ENCODE measurements at regions of chr10 and their contacts with region 1.

Region 1: GRCh38 chr10:4656576-4657182 is 169.3 kb upstream of the AKR1E2 start:
- DNase-seq: peak; percentile 47 to 66 (median 59)
- ATAC-seq: peak in 3 of 4 donors; percentile 70 to 76 (median 72)
- H3K4me3 ChIP-seq: no peak overlapping the region
- H3K27ac ChIP-seq: peak overlapping the region in 1 of 12 donors; percentile 12
- H3K4me1 ChIP-seq: peaks cover 0 to 22% (median 8%) of the 10 kb centered on the region in 12 donors
- H3K27me3 ChIP-seq: no peaks in the 10 kb centered on the region
- CTCF ChIP-seq: peak; percentile 85 to 97 (median 91)
- POLR2A ChIP-seq: no peak

Region 2: GRCh38 chr10:3197348-3198003 is 1459.2 kb before region 1 on chr10:
- intact Hi-C with region 1: loop called in 5 of 10 experiments (anchors 5 to 10 kb)
- DNase-seq: peak; percentile 78 to 90 (median 83)
- ATAC-seq: peak; percentile 76 to 96 (median 92)
- H3K4me3 ChIP-seq: peak overlapping the region in 9 of 12 donors; percentile 18 to 43 (median 32)
- H3K27ac ChIP-seq: peak overlapping the region in 4 of 12 donors; percentile 26 to 61 (median 28)
- H3K4me1 ChIP-seq: peaks cover 0 to 23% (median 11%) of the 10 kb centered on the region in 12 donors
- H3K27me3 ChIP-seq: no peaks in the 10 kb centered on the region
- CTCF ChIP-seq: peak; percentile 81 to 96 (median 93)
- POLR2A ChIP-seq: no peak

Region 3: GRCh38 chr10:3791974-3792633 is 864.6 kb before region 1 on chr10:
- intact Hi-C with region 1: loop called in 5 of 10 experiments (anchors 5 to 10 kb)
- DNase-seq: no peak
- ATAC-seq: no peak
- H3K4me3 ChIP-seq: no peak overlapping the region
- H3K27ac ChIP-seq: no peak overlapping the region
- H3K4me1 ChIP-seq: peaks cover 0 to 5% (median 0%) of the 10 kb centered on the region in 12 donors
- H3K27me3 ChIP-seq: no peaks in the 10 kb centered on the region
- CTCF ChIP-seq: no peak
- POLR2A ChIP-seq: no peak

Region 4: GRCh38 chr10:4081685-4082111 is 575.0 kb before region 1 on chr10:
- intact Hi-C with region 1: loop called in 4 of 10 experiments (anchors 5 to 10 kb)
- DNase-seq: peak in 3 of 5 donors; percentile 43 to 55 (median 47)
- ATAC-seq: peak in 3 of 4 donors; percentile 28 to 57 (median 57)
- H3K4me3 ChIP-seq: no peak overlapping the region
- H3K27ac ChIP-seq: peak overlapping the region in 10 of 12 donors; percentile 40 to 59 (median 52)
- H3K4me1 ChIP-seq: peaks cover 0 to 55% (median 32%) of the 10 kb centered on the region in 12 donors
- H3K27me3 ChIP-seq: no peaks in the 10 kb centered on the region
- CTCF ChIP-seq: no peak
- POLR2A ChIP-seq: no peak

Region 5: DNA sequence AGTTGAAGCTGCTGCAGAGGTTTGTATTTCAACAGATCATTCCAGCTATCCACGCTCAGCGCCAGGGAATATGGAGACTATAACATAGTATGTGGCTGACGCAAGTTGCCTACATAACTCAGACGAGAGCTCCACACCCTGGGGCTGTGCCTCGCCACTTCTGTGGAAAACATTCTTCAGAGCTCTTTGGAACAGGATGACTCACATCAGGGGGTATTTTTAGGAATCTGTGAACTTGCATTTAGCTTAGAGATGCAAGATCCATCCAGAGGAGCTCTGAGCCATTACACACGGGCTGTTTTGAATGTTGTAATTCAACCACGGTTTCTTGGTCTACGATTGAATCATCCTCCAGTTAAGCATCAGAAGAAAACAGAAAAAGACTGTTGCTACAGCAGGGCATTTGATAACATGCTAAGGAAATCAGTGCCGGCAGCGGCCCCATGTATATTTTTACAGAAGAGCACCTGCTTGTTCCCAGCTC is 312.1 kb before region 1 on chr10:
- intact Hi-C with region 1: loop called in 2 of 10 experiments (anchors 10 kb)
- DNase-seq: peak; percentile 65 to 80 (median 65)
- ATAC-seq: peak; percentile 94 to 97 (median 95)
- H3K4me3 ChIP-seq: peak overlapping the region in 3 of 12 donors; percentile 2 to 25 (median 22)
- H3K27ac ChIP-seq: peak overlapping the region; percentile 56 to 84 (median 69)
- H3K4me1 ChIP-seq: peaks cover 0 to 33% (median 18%) of the 10 kb centered on the region in 12 donors
- H3K27me3 ChIP-seq: no peaks in the 10 kb centered on the region
- CTCF ChIP-seq: peak in 5 of 12 donors; percentile 3 to 28 (median 18)
- POLR2A ChIP-seq: no peak

Region 6: GRCh38 chr10:4372601-4373000 is 284.1 kb before region 1 on chr10:
- intact Hi-C with region 1: loop called in 2 of 10 experiments (anchors 10 kb)
- DNase-seq: peak in 2 of 5 donors; percentile 19 to 35
- ATAC-seq: peak; percentile 84 to 98 (median 91)
- H3K4me3 ChIP-seq: no peak overlapping the region
- H3K27ac ChIP-seq: peak overlapping the region in 10 of 12 donors; percentile 32 to 71 (median 59)
- H3K4me1 ChIP-seq: peaks cover 0 to 20% (median 7%) of the 10 kb centered on the region in 12 donors
- H3K27me3 ChIP-seq: no peaks in the 10 kb centered on the region
- CTCF ChIP-seq: no peak
- POLR2A ChIP-seq: no peak

Region 7: DNA sequence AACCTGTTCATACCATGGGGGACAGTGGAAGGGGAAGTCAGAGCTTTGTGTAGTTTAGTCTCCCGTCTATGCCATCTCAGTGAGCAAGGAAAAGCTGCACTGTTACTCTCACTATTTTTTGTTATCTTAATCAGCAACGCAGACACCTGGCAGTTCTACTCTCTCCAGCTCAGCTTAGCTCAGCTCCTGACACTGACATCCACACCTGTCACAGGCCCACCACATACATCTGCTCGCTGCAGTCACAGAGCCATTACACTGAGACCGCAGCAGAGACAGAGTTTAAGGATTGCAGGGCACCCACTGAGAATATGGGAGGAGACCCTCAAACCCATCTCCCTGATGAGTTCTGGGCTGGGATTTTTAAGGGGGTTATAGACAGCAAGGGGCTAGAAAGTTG is 87.9 kb before region 1 on chr10:
- intact Hi-C with region 1: no loop called
- DNase-seq: no peak
- ATAC-seq: no peak
- H3K4me3 ChIP-seq: no peak overlapping the region
- H3K27ac ChIP-seq: no peak overlapping the region
- H3K4me1 ChIP-seq: peaks cover 0 to 8% (median 0%) of the 10 kb centered on the region in 12 donors
- H3K27me3 ChIP-seq: no peaks in the 10 kb centered on the region
- CTCF ChIP-seq: no peak
- POLR2A ChIP-seq: no peak

Region 8: DNA sequence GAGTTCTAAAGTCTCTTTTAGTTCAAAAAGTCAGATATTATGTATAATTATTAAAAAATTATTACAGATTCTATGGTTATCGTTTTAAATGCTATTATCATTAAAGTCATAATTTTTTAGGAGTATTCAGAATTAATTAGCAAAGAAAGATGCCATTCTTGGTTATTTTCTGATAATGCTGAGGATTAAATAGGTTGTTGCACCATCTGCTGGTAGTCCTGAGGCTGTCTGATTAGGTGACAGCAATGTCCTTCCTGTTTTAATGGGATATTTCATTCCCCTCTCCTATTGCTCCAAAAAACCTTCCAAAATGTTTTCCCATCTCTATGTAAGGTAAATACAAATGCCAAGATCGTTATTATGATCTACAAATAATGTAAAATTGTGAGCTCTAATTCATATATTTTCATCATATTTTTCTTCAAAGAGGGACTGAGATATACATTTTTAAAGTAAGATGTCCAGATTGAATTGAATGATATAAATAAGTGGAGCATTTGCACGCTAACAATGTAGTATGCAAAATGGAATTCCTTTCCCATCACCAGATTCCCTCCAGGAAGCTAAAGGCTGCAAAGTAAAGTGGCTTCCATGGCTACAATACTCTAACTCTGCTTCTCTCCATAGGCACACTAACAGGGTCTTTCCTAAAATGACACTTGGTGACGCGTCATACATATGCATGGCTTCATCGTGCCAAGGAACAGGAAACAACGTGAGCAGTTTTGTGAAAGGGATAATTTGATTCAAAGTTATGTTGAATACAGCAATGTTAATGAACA is 110.5 kb after region 1 on chr10:
- intact Hi-C with region 1: loop called in 7 of 10 experiments (anchors 2 to 5 kb)
- DNase-seq: peak in 2 of 5 donors; percentile 19 to 28
- ATAC-seq: peak in 3 of 4 donors; percentile 44 to 66 (median 57)
- H3K4me3 ChIP-seq: no peak overlapping the region
- H3K27ac ChIP-seq: peak overlapping the region in 10 of 12 donors; percentile 1 to 53 (median 36)
- H3K4me1 ChIP-seq: peaks cover 0 to 52% (median 33%) of the 10 kb centered on the region in 12 donors
- H3K27me3 ChIP-seq: no peaks in the 10 kb centered on the region
- CTCF ChIP-seq: peak; percentile 58 to 90 (median 81)
- POLR2A ChIP-seq: no peak

Measured in heart left ventricle (tissue), 16 donors.